Mammary epithelial cell (primary cell): ENCODE measurements at regions of chr18 and their contacts with region 1.

Region 1: GRCh38 chr18:48445540-48445939 is 36.4 kb upstream of the ZBTB7C start:
- DNase-seq: peak; percentile 75
- H3K4me3 ChIP-seq: no peak overlapping the region
- H3K27ac ChIP-seq: no peak overlapping the region
- H3K4me1 ChIP-seq: peaks cover 16% of the 10 kb centered on the region
- H3K27me3 ChIP-seq: no peaks in the 10 kb centered on the region
- CTCF ChIP-seq: peak; percentile 98

Region 2: GRCh38 chr18:47772374-47773248 is 672.9 kb before region 1 on chr18:
- CTCF ChIA-PET with region 1: no interaction called
- dilution Hi-C with region 1: no loop called
- in situ Hi-C with region 1: no loop called
- intact Hi-C with region 1: loop called (anchors 5 kb)
- DNase-seq: peak; percentile 80
- H3K4me3 ChIP-seq: no peak overlapping the region
- H3K27ac ChIP-seq: no peak overlapping the region
- H3K4me1 ChIP-seq: peaks cover 4% of the 10 kb centered on the region
- H3K27me3 ChIP-seq: no peaks in the 10 kb centered on the region
- CTCF ChIP-seq: peak; percentile 92

Region 3: DNA sequence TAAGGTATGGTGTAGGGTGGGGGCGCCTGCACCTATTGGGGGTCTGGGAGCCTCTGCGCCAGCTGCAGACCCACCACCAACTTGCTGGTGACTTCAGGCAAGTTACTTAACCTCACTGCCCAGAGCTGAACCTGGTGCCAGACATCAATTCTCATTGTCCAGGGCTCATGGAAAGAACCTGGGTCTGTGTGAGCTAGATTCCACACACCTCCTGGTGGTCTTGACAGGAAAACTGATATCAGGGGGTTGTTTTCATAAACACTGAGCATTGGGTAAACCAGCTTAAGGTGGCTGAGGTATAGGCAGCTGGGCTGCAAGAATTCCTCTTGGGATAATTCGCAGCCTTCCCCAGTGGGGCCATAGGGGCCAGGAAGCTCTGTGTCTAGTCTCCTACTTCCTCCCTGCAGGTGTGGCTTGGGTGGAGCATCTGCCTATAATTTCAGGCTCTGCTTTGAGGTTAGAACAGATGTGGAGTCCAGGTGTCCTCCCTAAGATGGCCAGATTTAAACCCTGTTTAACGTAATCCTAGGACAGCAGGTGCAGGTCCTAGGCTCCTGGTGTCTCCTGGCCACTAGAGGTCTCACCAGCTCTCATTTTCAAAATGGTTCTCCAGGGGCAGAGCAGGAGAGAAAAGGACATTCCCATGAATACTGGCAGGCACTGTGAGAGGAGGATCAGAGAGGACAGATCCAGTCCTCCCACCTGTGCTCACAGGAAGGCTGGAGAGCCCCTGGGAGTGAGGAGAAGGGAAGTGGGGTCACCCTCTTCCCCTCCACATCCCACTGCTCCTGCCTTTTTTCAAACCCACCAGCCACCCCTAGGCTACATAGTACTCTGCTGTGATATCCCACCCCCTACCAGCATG is 414.7 kb before region 1 on chr18:
- CTCF ChIA-PET with region 1: no interaction called
- dilution Hi-C with region 1: no loop called
- in situ Hi-C with region 1: loop called (anchors 5 kb)
- intact Hi-C with region 1: loop called (anchors 1 kb)
- DNase-seq: peak; percentile 62
- H3K4me3 ChIP-seq: no peak overlapping the region
- H3K27ac ChIP-seq: no peak overlapping the region
- H3K4me1 ChIP-seq: peaks cover 32% of the 10 kb centered on the region
- H3K27me3 ChIP-seq: no peaks in the 10 kb centered on the region
- CTCF ChIP-seq: peak; percentile 89 to 91

Region 4: DNA sequence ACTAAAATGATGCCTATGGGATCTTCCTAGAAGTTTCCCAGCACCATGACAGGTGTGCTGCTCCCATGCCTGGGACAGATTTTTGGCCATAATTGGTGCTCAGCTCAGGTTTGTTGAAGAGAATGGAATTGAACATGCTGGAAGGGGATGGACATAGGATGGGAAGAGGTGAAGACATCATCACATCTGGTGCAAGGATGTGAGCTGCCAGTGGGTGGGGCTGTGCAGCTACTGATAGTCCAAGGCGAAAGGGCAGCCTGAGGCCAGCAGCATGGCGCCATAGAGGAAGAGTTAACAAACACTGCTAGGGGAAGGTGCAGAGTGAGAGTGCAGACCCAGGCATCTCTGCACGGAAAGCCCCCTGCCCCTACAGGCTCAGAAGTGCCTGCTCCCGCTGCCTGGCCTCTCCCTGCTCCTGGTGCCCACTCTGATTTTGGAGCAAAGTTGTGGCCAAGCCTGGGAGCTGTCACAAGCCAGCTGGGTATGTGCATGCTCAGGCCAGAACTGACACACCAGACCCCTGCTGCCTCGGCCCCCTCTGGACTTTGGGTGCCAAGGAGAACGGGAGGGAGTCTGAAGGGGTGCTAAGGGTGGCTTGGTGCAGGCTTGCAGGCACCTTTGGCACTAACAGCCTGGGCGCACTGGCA is 214.9 kb before region 1 on chr18:
- CTCF ChIA-PET with region 1: interaction called, 3 read pairs
- dilution Hi-C with region 1: loop called (anchors 5 kb)
- in situ Hi-C with region 1: loop called (anchors 10 kb)
- intact Hi-C with region 1: loop called (anchors 1 kb)
- DNase-seq: peak; percentile 61
- H3K4me3 ChIP-seq: no peak overlapping the region
- H3K27ac ChIP-seq: no peak overlapping the region
- H3K4me1 ChIP-seq: peaks cover 41% of the 10 kb centered on the region
- H3K27me3 ChIP-seq: no peaks in the 10 kb centered on the region
- CTCF ChIP-seq: peak; percentile 82 to 85

Region 5: DNA sequence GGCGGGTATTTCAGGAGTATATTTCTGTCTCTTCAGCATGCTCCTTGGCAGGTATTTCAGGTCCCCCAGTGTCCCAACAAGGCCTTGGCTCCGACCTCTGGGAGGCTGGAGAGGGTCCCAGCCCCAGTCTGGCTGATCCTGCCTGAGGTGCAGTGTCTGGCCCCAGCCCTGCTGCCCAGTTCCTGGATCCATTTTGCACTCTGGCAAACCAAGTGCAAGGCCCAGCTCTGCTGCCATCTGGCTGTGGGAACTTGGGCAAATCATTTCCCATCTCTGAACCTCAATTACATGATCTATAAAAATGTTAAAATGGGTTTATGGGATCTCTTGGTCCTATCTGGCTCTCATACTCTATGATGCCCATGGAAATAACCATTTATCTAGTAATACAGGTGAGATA is 99.9 kb before region 1 on chr18:
- CTCF ChIA-PET with region 1: no interaction called
- dilution Hi-C with region 1: no loop called
- in situ Hi-C with region 1: loop called in 1 of 2 experiments (anchors 10 kb)
- intact Hi-C with region 1: loop called (anchors 1 kb)
- DNase-seq: no peak
- H3K4me3 ChIP-seq: no peak overlapping the region
- H3K27ac ChIP-seq: no peak overlapping the region
- H3K4me1 ChIP-seq: peaks cover 11% of the 10 kb centered on the region
- H3K27me3 ChIP-seq: no peaks in the 10 kb centered on the region
- CTCF ChIP-seq: peak; percentile 45 to 67

Region 6: DNA sequence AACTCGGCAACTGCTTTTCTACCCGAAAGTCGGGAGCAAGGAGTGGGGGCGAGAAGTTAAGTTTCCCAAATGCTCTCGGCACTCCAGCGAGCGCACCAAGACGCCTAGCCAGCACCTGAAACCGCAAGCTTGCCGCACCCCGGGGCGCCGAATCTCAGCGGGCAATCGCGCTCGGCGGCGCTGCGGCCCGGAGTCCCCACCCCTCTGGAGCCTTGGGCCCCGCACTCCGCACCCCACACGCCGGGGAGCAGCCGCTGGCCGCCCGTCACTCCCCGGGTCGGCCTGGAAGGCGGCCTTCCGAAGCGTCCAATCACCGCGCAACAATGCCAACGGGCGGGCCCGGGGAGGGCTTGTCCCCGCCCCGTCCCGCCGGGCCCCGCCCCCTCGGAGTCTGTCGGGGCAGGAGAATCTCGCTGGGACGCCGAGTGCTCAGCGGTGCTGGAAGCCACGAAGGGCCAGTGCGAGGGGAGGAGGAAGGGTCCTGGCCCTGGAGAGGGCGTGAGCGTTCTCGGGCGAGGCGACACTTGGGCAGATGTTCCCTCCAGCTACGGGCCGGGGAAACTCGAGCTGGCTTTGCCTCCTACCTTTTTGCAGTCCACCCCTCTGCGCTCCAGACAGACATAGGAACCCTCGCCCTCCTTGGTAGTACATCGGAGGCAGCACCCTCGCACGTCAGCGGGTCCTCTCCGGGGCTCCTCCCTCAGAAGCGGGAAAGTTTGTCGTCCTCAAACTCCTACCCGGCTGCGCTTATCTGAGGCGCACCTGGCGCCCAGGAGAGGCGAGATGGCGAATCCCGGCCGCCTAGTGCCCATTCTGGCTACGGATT is 35.2 kb before region 1 on chr18:
- CTCF ChIA-PET with region 1: no interaction called
- dilution Hi-C with region 1: no loop called
- in situ Hi-C with region 1: no loop called
- intact Hi-C with region 1: loop called (anchors 1 kb)
- DNase-seq: peak; percentile 93
- H3K4me3 ChIP-seq: peak overlapping the region; percentile 75 to 84 (median 82)
- H3K27ac ChIP-seq: peak overlapping the region; percentile 52
- H3K4me1 ChIP-seq: peaks cover 31% of the 10 kb centered on the region
- H3K27me3 ChIP-seq: no peaks in the 10 kb centered on the region
- CTCF ChIP-seq: peak; percentile 20 to 24